ENCODE measurements at regions of chr5 and their contacts with region 1.

Region 1: DNA sequence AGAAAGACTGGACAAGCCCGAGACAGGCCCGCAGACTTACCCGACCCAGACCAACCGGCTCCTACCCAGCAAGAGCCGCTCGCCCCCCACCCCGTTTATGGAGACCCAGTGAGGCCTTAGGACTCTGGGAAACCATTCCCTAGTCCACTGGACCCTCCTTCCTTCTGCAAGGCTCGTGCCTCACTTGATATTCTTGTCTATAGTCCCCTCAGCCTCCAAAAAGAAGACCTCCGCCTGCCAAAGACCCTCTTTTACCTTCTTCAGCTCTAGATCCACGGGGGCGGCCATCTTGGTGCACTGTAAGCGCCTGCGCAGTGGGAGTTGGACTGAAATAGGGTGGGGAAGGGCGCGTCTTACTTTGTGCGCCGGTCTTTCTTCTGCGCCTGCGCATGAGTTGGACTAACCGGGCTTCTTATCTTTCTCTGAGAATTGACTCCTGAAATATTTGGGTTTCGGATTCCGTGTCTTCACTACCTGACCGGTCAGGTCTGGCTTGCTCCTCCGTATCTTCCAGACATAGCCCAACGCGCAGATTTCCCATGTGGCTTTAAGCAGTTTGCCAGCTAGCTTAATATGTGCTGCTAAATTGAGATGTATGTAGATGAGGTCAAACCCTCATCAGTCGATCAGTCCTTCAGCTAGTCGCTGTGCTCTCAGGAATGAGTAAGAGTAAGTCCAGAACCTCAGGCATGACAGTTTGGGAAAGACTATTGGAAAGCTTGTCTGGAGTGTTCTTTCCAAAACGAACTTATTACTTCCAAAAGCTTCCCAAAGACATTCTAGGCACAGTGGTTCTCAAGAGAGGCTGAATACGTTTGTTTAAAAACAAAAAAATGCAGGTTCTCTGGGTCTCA is at the start of gene PFDN1:
- DNase-seq: peak; percentile 95
- H3K4me3 Mint-ChIP-seq: peak within 1 kb of the TSS; percentile 99
- H3K27ac Mint-ChIP-seq: peak within 1 kb of the TSS; percentile 91
- H3K4me1 Mint-ChIP-seq: peaks cover 20% of the 10 kb centered on the region
- H3K27me3 Mint-ChIP-seq: no peaks in the 10 kb centered on the region
- total RNA-seq, gene PFDN1: 50.6 to 57.1 TPM

Region 2: DNA sequence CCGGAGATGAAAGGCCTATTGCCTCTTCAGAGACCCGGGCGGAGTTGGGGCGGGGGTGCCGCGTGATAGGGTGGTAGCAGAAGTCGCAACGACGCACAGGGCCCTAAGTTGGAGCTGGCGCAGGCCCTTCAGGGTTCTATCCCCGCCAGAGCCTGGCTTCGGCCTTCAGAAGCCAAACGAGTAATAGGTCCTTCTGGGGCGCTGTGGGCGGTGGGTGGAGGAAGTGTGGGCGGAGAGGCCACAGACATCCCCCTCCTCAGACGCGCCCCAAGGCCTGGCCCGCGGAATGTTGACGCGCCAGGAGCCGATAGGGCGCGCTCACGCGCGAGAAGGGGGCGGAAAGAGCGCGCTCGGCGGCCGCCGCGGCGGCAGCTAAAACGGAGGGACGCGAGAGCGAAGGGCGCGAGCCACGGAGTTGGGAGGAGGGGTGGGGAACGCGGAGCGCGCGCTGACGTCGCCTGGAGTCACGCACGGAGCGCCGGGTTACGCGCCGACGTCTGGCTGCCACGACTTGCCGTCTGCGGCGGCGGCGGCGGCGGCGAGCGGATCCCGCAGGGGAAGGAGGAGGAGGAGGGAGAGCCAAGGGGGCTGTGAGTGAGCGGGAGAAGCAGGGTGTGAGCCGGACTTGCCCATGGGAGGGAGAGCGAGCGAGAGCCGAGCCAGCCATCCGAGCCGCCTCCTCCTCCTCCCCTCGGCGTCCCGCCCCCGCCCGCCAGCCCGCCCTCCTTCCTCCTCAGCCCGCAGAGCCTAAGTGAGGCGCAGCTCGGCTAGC is 195.5 kb before region 1 on chr5:
- CTCF ChIA-PET with region 1: no interaction called
- intact Hi-C with region 1: loop called (anchors 5 kb)
- DNase-seq: peak; percentile 91
- H3K4me3 Mint-ChIP-seq: peak overlapping the region; percentile 98
- H3K27ac Mint-ChIP-seq: peak overlapping the region; percentile 91
- H3K4me1 Mint-ChIP-seq: peaks cover 39% of the 10 kb centered on the region
- H3K27me3 Mint-ChIP-seq: no peaks in the 10 kb centered on the region

Region 3: GRCh38 chr5:140244525-140245025 is 58.4 kb before region 1 on chr5:
- CTCF ChIA-PET with region 1: interaction called, 11 read pairs
- intact Hi-C with region 1: no loop called
- DNase-seq: peak; percentile 91
- H3K4me3 Mint-ChIP-seq: no peak overlapping the region
- H3K27ac Mint-ChIP-seq: peak overlapping the region; percentile 65
- H3K4me1 Mint-ChIP-seq: peaks cover 27% of the 10 kb centered on the region
- H3K27me3 Mint-ChIP-seq: no peaks in the 10 kb centered on the region

Region 4: DNA sequence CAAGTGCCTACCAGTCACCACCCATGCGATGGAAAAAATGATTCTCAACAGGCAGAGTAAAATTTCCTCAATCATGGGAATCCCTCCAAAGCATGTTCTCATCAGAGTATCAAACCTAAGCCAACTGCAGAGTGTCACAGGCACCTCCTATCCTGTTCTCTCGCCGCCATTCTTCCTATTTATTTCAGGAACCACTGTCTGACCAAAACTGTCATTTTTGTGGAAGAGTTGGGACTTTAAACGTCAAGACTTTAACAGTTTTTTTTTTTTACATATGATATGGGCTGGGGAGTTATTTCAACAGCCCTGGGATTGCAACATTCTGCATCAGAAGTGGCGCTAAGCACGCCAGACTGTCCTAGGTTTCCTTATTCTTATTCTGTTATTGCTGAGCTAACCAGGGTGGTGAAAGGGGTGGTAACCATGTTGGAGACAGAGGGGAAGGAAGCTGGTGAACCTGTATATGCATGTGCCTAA is 29.6 kb before region 1 on chr5:
- CTCF ChIA-PET with region 1: no interaction called
- intact Hi-C with region 1: no loop called
- DNase-seq: no peak
- H3K4me3 Mint-ChIP-seq: no peak overlapping the region
- H3K27ac Mint-ChIP-seq: no peak overlapping the region
- H3K4me1 Mint-ChIP-seq: peaks cover 20% of the 10 kb centered on the region
- H3K27me3 Mint-ChIP-seq: no peaks in the 10 kb centered on the region

Region 5: DNA sequence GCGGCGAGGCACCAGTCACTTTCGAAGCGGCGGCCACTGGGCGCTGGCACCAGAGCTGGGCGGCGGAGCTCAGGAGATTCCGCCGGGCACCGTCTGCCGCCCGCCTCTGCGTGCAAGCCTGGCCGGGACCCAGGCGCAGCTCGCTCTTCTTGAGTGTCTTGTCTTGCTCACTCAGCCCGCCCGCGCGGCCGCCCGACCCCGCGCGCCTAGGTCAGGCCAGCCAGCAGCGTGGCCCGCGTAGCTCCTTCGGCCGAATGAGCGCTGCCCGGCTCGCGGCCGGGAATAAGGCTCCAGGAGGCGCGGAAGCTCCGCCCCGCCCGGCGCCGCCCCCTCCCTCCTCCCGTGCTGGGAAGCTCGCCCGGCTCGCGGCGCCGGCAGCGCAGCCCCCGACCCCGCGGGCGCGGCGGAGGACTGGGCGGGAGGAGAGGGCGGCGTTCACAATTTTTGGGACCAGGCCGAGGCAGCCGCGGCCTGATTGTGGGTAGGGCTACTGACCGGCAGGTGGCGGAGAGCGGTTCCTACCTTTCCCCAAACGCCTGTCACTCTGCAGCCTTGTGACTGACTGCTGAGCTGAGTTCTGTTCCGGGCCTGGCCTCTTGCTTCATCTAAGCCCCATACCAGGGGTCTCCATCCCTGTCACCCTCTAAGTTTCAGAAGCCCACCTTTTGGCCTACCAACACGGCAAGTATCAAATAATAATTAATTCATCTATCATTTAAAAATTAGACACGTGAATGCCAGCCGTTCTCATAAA is 43.5 kb after region 1 on chr5 and contains the start of gene HBEGF:
- CTCF ChIA-PET with region 1: interaction called, 9 read pairs
- intact Hi-C with region 1: loop called (anchors 1 kb)
- DNase-seq: peak; percentile 61
- H3K4me3 Mint-ChIP-seq: peak within 1 kb of the TSS; percentile 75
- H3K27ac Mint-ChIP-seq: peak within 1 kb of the TSS; percentile 41
- H3K4me1 Mint-ChIP-seq: peaks cover 41% of the 10 kb centered on the region
- H3K27me3 Mint-ChIP-seq: peaks cover 7% of the 10 kb centered on the region
- total RNA-seq, gene HBEGF: 8.7 to 9.1 TPM

Region 6: GRCh38 chr5:140690941-140691924 is 388.2 kb after region 1 on chr5 and contains the starts of genes HARS1 and HARS2:
- CTCF ChIA-PET with region 1: no interaction called
- intact Hi-C with region 1: loop called (anchors 1 kb)
- DNase-seq: peak; percentile 92
- H3K4me3 Mint-ChIP-seq: peak within 1 kb of the TSS; percentile 100
- H3K27ac Mint-ChIP-seq: peak within 1 kb of the TSS; percentile 97
- H3K4me1 Mint-ChIP-seq: peaks cover 35% of the 10 kb centered on the region
- H3K27me3 Mint-ChIP-seq: no peaks in the 10 kb centered on the region
- total RNA-seq, gene HARS1: 69.0 to 74.8 TPM
- total RNA-seq, gene HARS2: 27.4 to 29.3 TPM

Region 7: DNA sequence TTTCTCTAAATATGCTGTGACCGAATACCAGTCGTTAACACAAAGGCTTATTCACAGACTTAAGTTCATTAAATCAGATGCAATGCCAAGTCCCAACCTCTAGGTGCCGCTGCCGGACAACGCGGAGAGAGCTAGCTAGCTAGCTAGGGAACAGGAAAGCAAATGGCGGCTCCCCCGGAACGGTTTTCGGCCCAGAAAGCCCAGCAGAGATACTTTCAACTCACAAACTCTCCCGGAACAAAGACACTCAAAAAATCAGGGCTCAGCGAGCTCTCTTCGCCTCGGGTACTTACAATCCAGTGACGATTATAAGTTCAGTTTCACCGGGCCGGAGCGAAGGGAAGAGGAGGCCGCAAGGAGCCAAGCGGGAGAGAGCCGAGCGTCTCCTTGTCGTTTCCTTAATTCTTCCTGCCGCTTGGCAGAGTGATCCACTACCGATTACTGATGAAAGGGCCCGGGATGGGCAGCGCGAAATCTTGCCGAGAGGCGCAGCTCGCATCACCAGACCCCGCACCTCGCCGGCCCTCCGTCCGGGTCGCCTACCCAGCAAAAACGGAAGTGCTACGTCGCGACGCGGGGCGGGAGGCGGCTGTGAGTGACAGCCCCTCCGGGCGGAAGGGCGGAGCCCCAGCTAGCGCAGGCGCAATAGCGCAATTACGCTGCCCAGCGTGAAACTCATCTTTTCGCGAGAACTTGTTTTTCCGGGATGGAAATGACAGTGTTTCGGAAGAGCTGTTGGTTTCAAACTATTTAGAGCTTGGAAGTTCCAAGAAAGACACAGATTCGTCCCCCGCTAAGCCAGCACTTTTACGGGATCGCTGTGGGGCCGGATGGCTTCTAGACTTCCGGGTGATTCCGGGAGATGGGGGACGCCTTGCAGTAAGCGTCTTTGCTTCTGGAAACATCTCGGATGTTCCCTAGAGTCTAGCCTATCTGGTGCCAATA is 1017.5 kb after region 1 on chr5 and contains the start of gene TAF7:
- CTCF ChIA-PET with region 1: no interaction called
- intact Hi-C with region 1: loop called (anchors 1 kb)
- DNase-seq: peak; percentile 95
- H3K4me3 Mint-ChIP-seq: peak within 1 kb of the TSS; percentile 97
- H3K27ac Mint-ChIP-seq: peak within 1 kb of the TSS; percentile 99
- H3K4me1 Mint-ChIP-seq: peaks cover 25% of the 10 kb centered on the region
- H3K27me3 Mint-ChIP-seq: no peaks in the 10 kb centered on the region
- total RNA-seq, gene TAF7: 57.0 to 57.9 TPM

Measured in activated naive CD4-positive, alpha-beta T cell treated with anti-CD3 and anti-CD28 coated beads for 36 hours (primary cell).